CD8-positive, alpha-beta memory T cell (primary cell): ENCODE measurements at regions of chr16 and their contacts with region 1.

Region 1: DNA sequence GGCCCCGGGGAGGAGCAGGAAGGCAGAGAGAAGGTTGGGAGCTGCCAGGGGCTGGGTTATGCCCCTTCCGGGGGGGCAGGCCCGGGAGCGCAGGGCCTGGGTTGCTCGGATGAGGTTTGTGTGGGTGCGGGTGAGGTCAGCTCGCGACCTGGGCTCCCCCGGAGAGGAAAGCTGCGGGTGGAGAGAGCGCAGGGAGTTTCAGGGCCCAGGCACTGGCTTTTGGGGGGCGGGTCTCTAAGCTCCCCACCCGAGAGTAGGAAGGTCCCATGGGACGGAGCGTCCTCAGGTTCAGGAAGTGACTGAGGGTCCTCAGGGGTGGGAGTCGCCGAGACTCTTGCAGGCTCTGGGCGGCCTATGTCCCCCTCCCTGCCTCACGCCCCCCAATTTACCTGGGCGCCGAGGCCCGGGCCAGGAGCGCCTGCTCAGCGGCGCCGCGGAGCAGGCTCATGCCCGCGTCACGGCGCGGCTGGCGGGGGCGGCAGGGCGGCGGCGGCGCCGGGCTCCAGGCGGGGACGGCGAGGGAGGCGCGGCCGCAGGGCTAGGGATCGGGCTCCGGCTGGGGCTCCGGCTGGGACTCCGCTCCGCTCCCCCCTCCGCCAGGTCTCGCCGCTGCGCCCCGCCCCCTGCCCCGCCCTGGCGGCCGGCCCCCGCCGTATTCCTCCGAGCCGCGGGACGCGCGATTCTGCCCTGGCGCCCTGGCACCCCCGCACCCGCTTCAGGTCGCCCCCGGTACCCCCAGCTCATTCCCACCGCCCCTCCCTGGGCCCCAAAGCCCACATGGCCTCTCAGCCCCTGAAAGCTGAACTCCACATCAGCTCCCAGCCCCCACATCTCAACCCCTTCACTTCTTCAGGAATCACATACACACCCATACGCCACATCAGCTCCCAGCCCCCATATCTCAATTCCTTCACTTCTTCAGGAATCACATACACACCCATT is at the start of gene DOK4:
- DNase-seq: peak; percentile 68 to 83 (median 76)
- H3K4me3 ChIP-seq: peak within 1 kb of the TSS; percentile 53
- H3K4me3 Mint-ChIP-seq: peak within 1 kb of the TSS; percentile 82 to 96 (median 85)
- H3K27ac ChIP-seq: peak within 1 kb of the TSS; percentile 47
- H3K27ac Mint-ChIP-seq: peak within 1 kb of the TSS; percentile 48 to 98 (median 78)
- H3K4me1 ChIP-seq: peaks cover 14% of the 10 kb centered on the region
- H3K4me1 Mint-ChIP-seq: peaks cover 22 to 26% (median 23%) of the 10 kb centered on the region in 3 donors
- H3K27me3 ChIP-seq: no peaks in the 10 kb centered on the region
- H3K27me3 Mint-ChIP-seq: peaks cover 0 to 4% of the 10 kb centered on the region in 2 donors
- total RNA-seq, gene DOK4: 6.8 to 7.0 TPM

Region 2: GRCh38 chr16:57178793-57179212 is 307.4 kb before region 1 on chr16:
- CTCF ChIA-PET with region 1: no interaction called
- POLR2A ChIA-PET with region 1: no interaction called
- DNase-seq: no peak
- H3K4me3 ChIP-seq: no peak overlapping the region
- H3K4me3 Mint-ChIP-seq: no peak overlapping the region
- H3K27ac ChIP-seq: no peak overlapping the region
- H3K27ac Mint-ChIP-seq: peak overlapping the region in 1 of 8 donors; percentile 32
- H3K4me1 ChIP-seq: no peaks in the 10 kb centered on the region
- H3K4me1 Mint-ChIP-seq: peaks cover 8 to 31% (median 25%) of the 10 kb centered on the region in 3 donors
- H3K27me3 ChIP-seq: no peaks in the 10 kb centered on the region
- H3K27me3 Mint-ChIP-seq: no peaks in the 10 kb centered on the region

Region 3: GRCh38 chr16:57475711-57476339 is 10.4 kb before region 1 on chr16:
- CTCF ChIA-PET with region 1: interaction called, 11 read pairs
- POLR2A ChIA-PET with region 1: interaction called, 4 read pairs
- DNase-seq: peak; percentile 56 to 80 (median 72)
- H3K4me3 ChIP-seq: no peak overlapping the region
- H3K4me3 Mint-ChIP-seq: peak overlapping the region in 5 of 7 donors; percentile 20 to 63 (median 39)
- H3K27ac ChIP-seq: no peak overlapping the region
- H3K27ac Mint-ChIP-seq: peak overlapping the region; percentile 29 to 80 (median 59)
- H3K4me1 ChIP-seq: peaks cover 16% of the 10 kb centered on the region
- H3K4me1 Mint-ChIP-seq: peaks cover 7 to 24% (median 8%) of the 10 kb centered on the region in 3 donors
- H3K27me3 ChIP-seq: no peaks in the 10 kb centered on the region
- H3K27me3 Mint-ChIP-seq: no peaks in the 10 kb centered on the region

Region 4: DNA sequence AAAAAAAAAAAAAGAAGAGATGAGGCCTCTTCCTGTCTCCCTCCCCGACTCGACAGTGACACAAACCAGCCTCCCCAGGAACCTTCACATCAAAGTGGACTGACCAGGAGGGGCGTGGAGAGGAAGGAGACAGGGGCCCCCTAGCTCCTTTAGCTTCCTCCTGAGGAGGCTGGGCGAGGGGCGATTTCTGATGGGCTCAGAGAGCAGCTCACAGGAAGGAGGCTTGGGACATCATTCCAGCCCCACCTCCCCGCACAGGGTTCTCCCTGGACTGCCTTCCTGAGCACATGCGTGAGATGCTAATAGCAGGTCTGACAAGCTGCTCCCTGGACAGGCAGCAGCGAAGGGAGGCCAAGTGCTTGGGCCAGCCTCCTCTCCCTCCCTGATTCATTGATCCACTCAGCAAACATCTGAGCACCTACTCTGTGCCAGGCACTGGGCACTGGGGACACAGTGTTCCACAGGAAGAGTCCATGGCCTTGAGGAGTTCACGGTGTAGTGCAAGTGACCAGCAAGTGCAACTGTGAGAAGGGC is 14.5 kb after region 1 on chr16:
- CTCF ChIA-PET with region 1: no interaction called
- POLR2A ChIA-PET with region 1: no interaction called
- DNase-seq: no peak
- H3K4me3 ChIP-seq: no peak overlapping the region
- H3K4me3 Mint-ChIP-seq: no peak overlapping the region
- H3K27ac ChIP-seq: no peak overlapping the region
- H3K27ac Mint-ChIP-seq: peak overlapping the region in 2 of 8 donors; percentile 33 to 82
- H3K4me1 ChIP-seq: peaks cover 8% of the 10 kb centered on the region
- H3K4me1 Mint-ChIP-seq: peaks cover 5 to 10% (median 6%) of the 10 kb centered on the region in 3 donors
- H3K27me3 ChIP-seq: no peaks in the 10 kb centered on the region
- H3K27me3 Mint-ChIP-seq: peaks cover 4 to 8% of the 10 kb centered on the region in 2 donors

Region 5: GRCh38 chr16:57535680-57536305 is 49.6 kb after region 1 on chr16:
- CTCF ChIA-PET with region 1: interaction called, 12 read pairs
- POLR2A ChIA-PET with region 1: interaction called, 22 read pairs
- DNase-seq: peak; percentile 89 to 96 (median 92)
- H3K4me3 ChIP-seq: peak overlapping the region; percentile 35
- H3K4me3 Mint-ChIP-seq: peak overlapping the region; percentile 76 to 91 (median 84)
- H3K27ac ChIP-seq: peak overlapping the region; percentile 63
- H3K27ac Mint-ChIP-seq: peak overlapping the region; percentile 91 to 99 (median 98)
- H3K4me1 ChIP-seq: peaks cover 78% of the 10 kb centered on the region
- H3K4me1 Mint-ChIP-seq: peaks cover 66 to 84% (median 68%) of the 10 kb centered on the region in 3 donors
- H3K27me3 ChIP-seq: no peaks in the 10 kb centered on the region
- H3K27me3 Mint-ChIP-seq: peaks cover 0 to 3% of the 10 kb centered on the region in 2 donors

Region 6: DNA sequence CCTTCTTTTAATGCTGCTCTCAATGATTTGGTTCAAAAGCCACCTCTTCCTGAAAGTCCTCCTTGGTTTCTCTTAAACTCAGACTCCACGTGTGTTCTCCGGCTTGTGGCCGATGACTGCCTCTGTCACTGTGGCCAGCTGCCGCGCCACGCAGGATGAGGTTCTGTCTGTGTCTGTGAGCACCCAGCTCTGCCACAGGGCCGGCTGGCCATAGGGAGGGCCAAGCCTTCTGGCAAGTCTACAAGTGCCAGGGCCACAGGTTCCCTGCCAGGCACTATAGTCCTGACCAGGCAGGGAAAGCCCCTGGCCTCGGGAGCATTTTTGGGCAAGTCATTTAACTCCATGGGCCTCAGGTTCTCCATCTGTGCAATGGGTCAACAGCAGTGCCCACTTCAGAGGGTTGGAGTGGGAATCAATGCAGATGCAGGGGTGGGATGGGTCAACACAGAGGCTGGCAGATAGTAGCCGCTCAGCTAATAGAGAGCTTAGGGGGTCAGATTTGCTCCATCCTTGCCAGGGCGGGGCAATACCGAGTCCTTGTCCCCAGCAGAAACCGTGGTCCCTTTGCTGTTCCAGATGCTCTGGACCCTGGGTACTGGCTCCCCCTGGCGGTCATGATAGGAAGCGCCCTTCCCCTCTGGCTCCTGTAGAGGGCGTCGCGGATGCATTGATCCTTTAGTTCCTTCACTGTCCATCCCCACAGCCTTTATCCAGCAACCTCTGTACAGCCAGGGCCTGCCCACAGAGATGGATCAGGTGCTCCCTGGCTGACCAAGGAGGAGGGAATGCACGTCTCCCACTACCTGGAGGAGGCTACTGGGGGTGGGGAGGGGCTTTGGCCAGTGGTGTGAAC is 162.6 kb after region 1 on chr16:
- CTCF ChIA-PET with region 1: no interaction called
- POLR2A ChIA-PET with region 1: no interaction called
- DNase-seq: peak; percentile 75 to 88 (median 79)
- H3K4me3 ChIP-seq: no peak overlapping the region
- H3K4me3 Mint-ChIP-seq: peak overlapping the region; percentile 41 to 88 (median 75)
- H3K27ac ChIP-seq: no peak overlapping the region
- H3K27ac Mint-ChIP-seq: peak overlapping the region; percentile 63 to 96 (median 83)
- H3K4me1 ChIP-seq: peaks cover 34% of the 10 kb centered on the region
- H3K4me1 Mint-ChIP-seq: peaks cover 45 to 54% (median 46%) of the 10 kb centered on the region in 3 donors
- H3K27me3 ChIP-seq: no peaks in the 10 kb centered on the region
- H3K27me3 Mint-ChIP-seq: peaks cover 0 to 2% of the 10 kb centered on the region in 2 donors

Region 7: DNA sequence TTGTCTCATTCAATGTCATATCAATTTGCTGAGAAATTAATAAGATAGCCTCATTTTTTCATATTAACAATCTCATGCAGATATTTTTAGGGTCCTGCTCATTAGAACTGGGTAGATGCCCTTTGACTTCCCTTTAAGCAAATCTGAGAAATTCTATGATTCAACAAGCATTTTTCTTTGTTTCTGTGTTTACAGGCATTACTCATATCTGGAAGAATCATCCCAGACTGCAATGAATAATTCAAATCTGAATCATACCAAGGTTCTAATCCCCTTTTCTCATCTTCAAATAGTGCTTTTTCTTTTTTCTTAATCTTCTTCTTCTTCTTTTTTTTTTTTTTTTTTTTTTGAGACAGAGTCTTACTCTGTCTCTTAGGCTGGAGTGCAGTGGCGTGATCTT is 385.3 kb after region 1 on chr16:
- CTCF ChIA-PET with region 1: no interaction called
- POLR2A ChIA-PET with region 1: no interaction called
- DNase-seq: no peak
- H3K4me3 ChIP-seq: no peak overlapping the region
- H3K4me3 Mint-ChIP-seq: no peak overlapping the region
- H3K27ac ChIP-seq: no peak overlapping the region
- H3K27ac Mint-ChIP-seq: no peak overlapping the region
- H3K4me1 ChIP-seq: no peaks in the 10 kb centered on the region
- H3K4me1 Mint-ChIP-seq: no peaks in the 10 kb centered on the region
- H3K27me3 ChIP-seq: no peaks in the 10 kb centered on the region
- H3K27me3 Mint-ChIP-seq: peaks cover 11 to 15% of the 10 kb centered on the region in 2 donors